Mammary epithelial cell (primary cell): ENCODE measurements at regions of chr4 and their contacts with region 1.

Region 1: DNA sequence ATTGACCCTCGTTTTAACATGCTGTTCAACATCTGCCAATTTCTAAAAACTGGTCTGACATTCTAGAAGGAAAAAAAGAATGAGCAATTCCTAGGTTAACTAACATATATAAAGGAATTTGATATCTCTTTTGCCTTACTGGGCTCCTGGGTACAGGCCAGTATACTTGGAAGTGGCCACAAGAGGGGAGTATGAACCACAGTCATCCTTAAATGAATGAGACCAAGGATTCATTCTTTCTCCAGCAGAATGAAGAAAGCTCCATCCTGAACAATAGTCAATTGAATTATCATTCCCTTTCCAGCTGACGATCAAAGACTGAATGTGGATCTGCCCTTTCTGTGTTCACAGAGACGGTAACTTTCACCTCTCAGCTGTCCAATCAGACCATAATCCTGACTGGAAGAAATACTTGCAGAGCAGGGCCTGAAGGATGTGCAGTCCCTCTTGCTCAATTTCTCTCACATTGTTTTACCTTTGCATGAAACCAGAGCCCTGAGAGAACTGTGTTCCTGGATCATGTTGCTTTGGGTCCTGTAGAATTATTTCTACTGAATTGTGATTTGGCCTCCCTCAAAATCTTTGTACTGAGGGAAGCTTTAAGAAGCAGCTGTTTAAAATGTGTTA is 14.8 kb upstream of the SPARCL1 start:
- DNase-seq: peak; percentile 49
- H3K4me3 ChIP-seq: no peak overlapping the region
- H3K27ac ChIP-seq: no peak overlapping the region
- H3K4me1 ChIP-seq: no peaks in the 10 kb centered on the region
- H3K27me3 ChIP-seq: no peaks in the 10 kb centered on the region
- CTCF ChIP-seq: peak; percentile 53 to 75

Region 2: DNA sequence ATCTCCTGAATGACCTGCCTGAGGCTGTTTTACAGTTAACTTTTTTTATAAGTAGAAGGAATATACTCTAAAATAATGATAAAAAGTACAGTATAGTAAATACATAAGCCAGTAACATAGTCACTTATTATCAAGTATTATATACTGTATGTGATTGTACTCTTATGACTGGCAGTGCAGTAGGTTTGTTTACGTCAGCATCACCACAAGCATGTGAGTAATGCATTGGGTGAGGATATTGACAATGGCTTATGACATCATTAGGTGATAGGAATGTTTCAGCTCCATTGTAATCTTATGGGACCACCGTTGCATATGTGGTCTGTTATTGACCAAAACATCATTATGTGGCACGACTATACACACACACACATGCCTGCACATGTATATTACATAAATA is 101.1 kb before region 1 on chr4:
- CTCF ChIA-PET with region 1: no interaction called
- dilution Hi-C with region 1: no loop called
- in situ Hi-C with region 1: no loop called
- intact Hi-C with region 1: no loop called
- DNase-seq: no peak
- H3K4me3 ChIP-seq: no peak overlapping the region
- H3K27ac ChIP-seq: no peak overlapping the region
- H3K4me1 ChIP-seq: no peaks in the 10 kb centered on the region
- H3K27me3 ChIP-seq: no peaks in the 10 kb centered on the region
- CTCF ChIP-seq: no peak

Region 3: GRCh38 chr4:87838890-87839591 is 295.1 kb after region 1 on chr4:
- CTCF ChIA-PET with region 1: no interaction called
- dilution Hi-C with region 1: loop called (anchors 10 kb)
- in situ Hi-C with region 1: loop called (anchors 5 to 10 kb)
- intact Hi-C with region 1: loop called (anchors 2 kb)
- DNase-seq: peak; percentile 23
- H3K4me3 ChIP-seq: no peak overlapping the region
- H3K27ac ChIP-seq: no peak overlapping the region
- H3K4me1 ChIP-seq: peaks cover 2% of the 10 kb centered on the region
- H3K27me3 ChIP-seq: no peaks in the 10 kb centered on the region
- CTCF ChIP-seq: peak; percentile 60 to 79

Region 4: GRCh38 chr4:87973283-87974169 is 429.6 kb after region 1 on chr4:
- CTCF ChIA-PET with region 1: interaction called, 4 read pairs
- dilution Hi-C with region 1: no loop called
- in situ Hi-C with region 1: no loop called
- intact Hi-C with region 1: loop called (anchors 5 kb)
- DNase-seq: peak; percentile 79
- H3K4me3 ChIP-seq: peak overlapping the region; percentile 12 to 30 (median 23)
- H3K27ac ChIP-seq: peak overlapping the region; percentile 41
- H3K4me1 ChIP-seq: peaks cover 17% of the 10 kb centered on the region
- H3K27me3 ChIP-seq: no peaks in the 10 kb centered on the region
- CTCF ChIP-seq: peak; percentile 75 to 82

Region 5: GRCh38 chr4:88591787-88592599 is 1048.0 kb after region 1 on chr4 and contains the start of gene HERC3:
- CTCF ChIA-PET with region 1: no interaction called
- dilution Hi-C with region 1: no loop called
- in situ Hi-C with region 1: no loop called
- intact Hi-C with region 1: no loop called
- DNase-seq: peak; percentile 87
- H3K4me3 ChIP-seq: peak within 1 kb of the TSS; percentile 77 to 90 (median 81)
- H3K27ac ChIP-seq: peak within 1 kb of the TSS; percentile 87
- H3K4me1 ChIP-seq: peaks cover 13% of the 10 kb centered on the region
- H3K27me3 ChIP-seq: no peaks in the 10 kb centered on the region
- CTCF ChIP-seq: no peak
- total RNA-seq, gene HERC3: 14.0 to 36.5 TPM